Right cardiac atrium (tissue), 5 donors: ENCODE measurements at regions of chr5 and their contacts with region 1.

Region 1: DNA sequence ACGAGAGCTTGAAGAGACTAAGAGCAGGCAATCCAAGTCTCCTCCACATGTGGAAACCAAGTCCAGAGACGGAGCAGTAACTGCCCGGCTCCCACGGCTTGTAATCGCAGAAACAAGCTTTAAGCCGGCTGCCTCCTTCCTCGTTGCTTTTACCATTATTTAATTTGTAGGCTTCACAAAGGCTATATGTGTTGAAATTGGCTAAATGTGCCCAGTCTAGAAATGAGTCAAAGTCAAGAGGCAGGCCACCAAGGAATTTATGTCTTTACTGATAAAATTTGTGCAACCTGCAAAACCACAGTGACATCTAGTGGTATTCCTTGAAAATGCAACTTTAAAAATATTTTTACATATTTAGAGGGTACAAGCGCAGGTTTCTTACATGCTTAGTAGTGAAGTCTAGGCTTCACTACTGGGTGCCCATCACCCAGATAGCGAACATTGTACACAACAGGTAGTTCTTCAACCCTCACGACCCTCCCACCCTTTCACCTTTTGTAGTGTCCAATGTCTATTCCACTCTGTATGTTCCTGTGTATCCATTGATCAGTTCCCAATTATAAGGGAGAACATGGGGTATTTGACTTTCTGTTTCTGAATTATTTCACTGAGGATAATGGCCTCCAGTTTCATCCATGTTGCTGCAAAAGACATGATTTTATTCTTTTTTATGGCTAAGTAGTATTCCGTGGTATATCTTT is 33.5 kb upstream of the EBF1 start:
- DNase-seq: peak in 2 of 3 donors; percentile 37 to 42
- ATAC-seq: peak; percentile 79
- H3K4me3 ChIP-seq: no peak overlapping the region
- H3K27ac ChIP-seq: no peak overlapping the region
- H3K4me1 ChIP-seq: no peaks in the 10 kb centered on the region
- H3K27me3 ChIP-seq: no peaks in the 10 kb centered on the region

Region 2: DNA sequence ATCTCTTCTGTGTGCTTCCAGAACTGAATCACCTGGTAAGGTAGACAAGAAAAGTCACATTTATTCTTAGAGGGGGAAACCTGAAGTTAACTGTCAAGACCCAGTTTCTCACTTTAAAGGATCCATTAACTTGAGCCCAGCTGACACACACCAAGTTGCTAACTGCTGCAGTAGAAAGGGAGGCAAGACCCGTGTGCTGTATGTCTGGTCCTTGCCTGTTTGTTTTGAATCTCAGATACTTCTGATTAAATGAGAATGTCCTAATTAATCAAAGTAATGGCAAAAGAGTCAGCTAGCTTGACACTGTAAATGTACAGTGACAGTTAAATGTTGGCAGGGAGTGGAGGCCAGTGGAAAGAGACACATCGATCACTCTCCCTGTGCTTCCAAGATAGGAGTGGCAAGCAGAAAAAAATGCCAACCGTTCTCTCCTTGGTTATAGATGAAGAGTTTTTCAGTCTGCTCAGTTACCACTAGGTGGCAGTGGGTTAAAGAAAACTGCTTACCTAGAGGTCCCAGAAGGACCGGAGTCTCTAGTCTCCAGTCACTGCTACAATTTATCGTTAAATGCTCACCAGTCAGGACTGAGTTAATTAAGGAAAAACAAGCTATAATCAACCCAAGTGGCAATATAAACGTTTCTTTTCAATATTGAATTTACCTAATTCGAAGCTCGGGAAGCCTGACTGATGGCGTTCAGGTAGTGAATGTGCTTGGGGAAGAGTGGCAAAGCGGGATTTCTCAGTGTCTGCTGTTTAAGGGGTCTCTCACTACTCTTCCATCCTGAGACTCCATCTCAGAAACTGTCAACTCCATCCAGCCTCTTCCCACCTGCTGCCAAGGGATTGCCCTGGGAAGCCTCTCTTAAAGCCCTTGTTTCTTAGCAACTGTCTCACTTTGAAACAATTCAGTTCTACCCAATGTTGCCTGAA is 1371.2 kb before region 1 on chr5:
- intact Hi-C with region 1: loop called in 1 of 4 experiments (anchors 10 kb)
- DNase-seq: no peak
- ATAC-seq: peak; percentile 80 to 89
- H3K4me3 ChIP-seq: no peak overlapping the region
- H3K27ac ChIP-seq: no peak overlapping the region
- H3K4me1 ChIP-seq: no peaks in the 10 kb centered on the region
- H3K27me3 ChIP-seq: no peaks in the 10 kb centered on the region

Region 3: DNA sequence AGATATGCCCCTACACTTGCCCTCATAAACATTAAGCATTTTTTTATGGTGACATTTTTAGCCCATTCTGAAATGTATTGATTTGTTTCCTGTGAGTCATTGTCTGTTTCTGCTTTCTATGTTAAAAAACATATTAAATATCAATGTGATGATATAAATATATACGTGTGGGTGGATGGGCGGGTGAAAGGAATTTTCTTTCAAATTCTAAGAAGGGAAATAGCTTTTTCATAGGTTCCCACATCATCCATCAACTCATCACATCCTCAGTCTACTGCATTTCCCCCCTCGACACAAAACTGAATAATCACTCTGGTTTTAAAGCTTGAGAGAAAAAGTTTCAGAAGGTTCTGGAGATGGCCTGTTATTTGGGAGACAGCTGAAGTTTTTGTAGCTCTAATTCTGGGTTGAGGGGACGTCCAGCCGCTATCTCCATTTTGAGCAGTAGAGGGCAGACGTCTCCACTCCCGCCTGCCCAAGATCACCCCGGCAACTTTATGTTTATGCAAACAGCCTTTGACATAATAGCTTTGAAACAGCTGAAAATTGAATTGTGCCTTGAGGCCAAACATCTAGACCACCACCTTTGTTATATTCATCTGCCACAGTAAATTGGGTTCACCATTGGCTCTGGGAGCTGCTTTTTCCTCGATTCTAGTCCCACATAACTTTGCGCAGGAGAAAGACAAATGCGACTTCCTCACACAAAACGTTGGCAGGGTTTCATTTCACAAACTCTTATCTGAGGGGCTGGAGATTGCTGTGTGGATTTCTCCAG is 1058.0 kb before region 1 on chr5:
- intact Hi-C with region 1: loop called in 1 of 4 experiments (anchors 10 kb)
- DNase-seq: peak; percentile 52 to 79 (median 65)
- ATAC-seq: peak; percentile 90 to 91
- H3K4me3 ChIP-seq: peak overlapping the region; percentile 69
- H3K27ac ChIP-seq: peak overlapping the region; percentile 45
- H3K4me1 ChIP-seq: no peaks in the 10 kb centered on the region
- H3K27me3 ChIP-seq: no peaks in the 10 kb centered on the region

Region 4: GRCh38 chr5:158928399-158928798 is 204.8 kb before region 1 on chr5:
- intact Hi-C with region 1: no loop called
- DNase-seq: no peak
- ATAC-seq: no peak
- H3K4me3 ChIP-seq: no peak overlapping the region
- H3K27ac ChIP-seq: no peak overlapping the region
- H3K4me1 ChIP-seq: peaks cover 2% of the 10 kb centered on the region
- H3K27me3 ChIP-seq: no peaks in the 10 kb centered on the region

Region 5: DNA sequence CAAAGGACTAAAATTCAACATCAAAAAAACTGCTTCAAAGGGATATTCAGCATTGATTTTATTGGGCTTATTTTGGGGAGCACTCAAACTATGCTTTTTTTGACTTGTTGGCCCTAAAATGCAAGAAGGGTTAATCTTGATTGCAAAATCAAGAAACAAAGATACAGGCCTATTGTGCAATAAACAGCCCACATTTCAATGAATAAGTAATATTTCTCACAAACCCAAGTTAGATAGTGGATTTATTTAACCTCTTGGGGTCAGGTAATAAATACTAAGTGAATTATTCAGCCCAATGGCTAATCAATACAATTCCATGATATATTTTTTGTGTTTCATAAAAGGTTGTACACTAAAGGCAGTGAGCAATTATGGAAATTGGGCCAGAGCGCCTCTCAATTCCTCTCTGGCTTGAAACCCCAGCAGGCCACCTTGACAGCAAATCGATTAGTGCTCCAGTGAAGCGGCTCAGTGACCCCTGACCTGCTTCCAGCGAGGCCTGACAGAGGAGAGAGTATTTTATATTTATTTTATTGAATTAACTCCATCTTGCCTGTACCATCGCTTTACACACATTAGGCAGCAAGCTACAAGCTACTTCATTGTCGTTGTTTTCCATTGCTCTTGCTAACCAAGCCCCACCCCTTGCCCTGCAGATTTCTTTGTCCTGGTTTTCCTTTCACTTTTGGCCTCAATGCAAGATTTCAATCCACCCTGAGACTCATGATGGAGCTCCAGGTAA is 98.9 kb before region 1 on chr5:
- intact Hi-C with region 1: no loop called
- DNase-seq: peak in 1 of 3 donors; percentile 33
- ATAC-seq: peak in 1 of 2 donors; percentile 83
- H3K4me3 ChIP-seq: peak overlapping the region; percentile 22
- H3K27ac ChIP-seq: peak overlapping the region; percentile 43
- H3K4me1 ChIP-seq: peaks cover 6% of the 10 kb centered on the region
- H3K27me3 ChIP-seq: no peaks in the 10 kb centered on the region

Region 6: DNA sequence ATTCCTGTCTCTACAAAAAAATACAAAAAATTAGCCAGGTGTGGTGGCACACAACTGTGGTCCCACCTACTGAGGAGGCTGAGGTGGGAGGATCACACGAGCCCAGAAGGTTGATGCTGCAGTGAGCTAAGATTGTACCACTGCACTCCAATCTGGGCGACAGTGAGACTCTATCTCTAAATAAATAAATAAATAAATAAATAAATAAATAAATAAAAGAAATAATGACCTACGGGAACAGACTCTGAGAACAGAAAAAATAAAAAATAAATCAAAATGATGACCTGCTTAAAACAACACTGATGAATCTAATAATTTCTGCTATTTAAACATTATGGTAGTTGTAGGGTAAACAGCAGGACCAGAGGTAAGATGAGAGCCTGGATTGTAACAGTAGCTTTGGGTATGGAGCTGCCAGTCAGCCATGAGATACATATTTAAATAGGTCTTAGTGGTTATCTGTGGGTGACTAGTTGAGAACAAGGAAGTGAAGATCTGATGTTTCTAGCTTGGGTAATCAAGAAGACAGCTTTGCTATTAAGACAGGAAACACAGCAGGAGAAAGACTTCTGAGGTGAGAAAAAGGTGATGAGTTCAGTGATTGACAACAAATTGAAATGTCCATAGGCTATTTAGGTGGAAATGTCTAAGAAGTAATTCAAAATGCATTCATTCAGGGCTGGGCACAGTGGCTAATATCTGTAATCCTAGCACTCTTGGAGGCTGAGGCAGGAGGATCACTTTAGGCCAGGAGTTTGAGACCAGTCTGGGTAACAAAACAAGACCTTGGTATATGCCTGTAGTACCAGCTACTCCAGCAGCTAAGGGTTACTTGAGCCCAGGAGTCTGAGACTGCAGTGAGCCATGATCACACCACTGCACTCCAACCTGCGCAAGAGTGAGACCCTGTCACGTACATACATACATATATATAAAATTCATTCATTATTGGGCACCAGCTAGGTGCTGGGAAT is 65.2 kb after region 1 on chr5:
- intact Hi-C with region 1: no loop called
- DNase-seq: no peak
- ATAC-seq: no peak
- H3K4me3 ChIP-seq: no peak overlapping the region
- H3K27ac ChIP-seq: no peak overlapping the region
- H3K4me1 ChIP-seq: peaks cover 1% of the 10 kb centered on the region
- H3K27me3 ChIP-seq: no peaks in the 10 kb centered on the region